HEK293 (cell line): ENCODE measurements at regions of chr6 and their contacts with region 1.

Region 1: GRCh38 chr6:152124429-152125074 is 317.1 kb downstream of the ESR1 start:
- H3K4me3 ChIP-seq: no peak overlapping the region
- H3K27ac ChIP-seq: no peak overlapping the region
- H3K4me1 ChIP-seq: no peaks in the 10 kb centered on the region
- CTCF ChIP-seq: peak; percentile 22; the same call in 1 of the 2 replicates

Region 2: GRCh38 chr6:152078804-152079203 is 45.7 kb before region 1 on chr6:
- CTCF ChIA-PET with region 1: no interaction called
- POLR2A ChIA-PET with region 1: no interaction called
- H3K4me3 ChIP-seq: no peak overlapping the region
- H3K27ac ChIP-seq: no peak overlapping the region
- H3K4me1 ChIP-seq: no peaks in the 10 kb centered on the region
- CTCF ChIP-seq: no peak

Region 3: DNA sequence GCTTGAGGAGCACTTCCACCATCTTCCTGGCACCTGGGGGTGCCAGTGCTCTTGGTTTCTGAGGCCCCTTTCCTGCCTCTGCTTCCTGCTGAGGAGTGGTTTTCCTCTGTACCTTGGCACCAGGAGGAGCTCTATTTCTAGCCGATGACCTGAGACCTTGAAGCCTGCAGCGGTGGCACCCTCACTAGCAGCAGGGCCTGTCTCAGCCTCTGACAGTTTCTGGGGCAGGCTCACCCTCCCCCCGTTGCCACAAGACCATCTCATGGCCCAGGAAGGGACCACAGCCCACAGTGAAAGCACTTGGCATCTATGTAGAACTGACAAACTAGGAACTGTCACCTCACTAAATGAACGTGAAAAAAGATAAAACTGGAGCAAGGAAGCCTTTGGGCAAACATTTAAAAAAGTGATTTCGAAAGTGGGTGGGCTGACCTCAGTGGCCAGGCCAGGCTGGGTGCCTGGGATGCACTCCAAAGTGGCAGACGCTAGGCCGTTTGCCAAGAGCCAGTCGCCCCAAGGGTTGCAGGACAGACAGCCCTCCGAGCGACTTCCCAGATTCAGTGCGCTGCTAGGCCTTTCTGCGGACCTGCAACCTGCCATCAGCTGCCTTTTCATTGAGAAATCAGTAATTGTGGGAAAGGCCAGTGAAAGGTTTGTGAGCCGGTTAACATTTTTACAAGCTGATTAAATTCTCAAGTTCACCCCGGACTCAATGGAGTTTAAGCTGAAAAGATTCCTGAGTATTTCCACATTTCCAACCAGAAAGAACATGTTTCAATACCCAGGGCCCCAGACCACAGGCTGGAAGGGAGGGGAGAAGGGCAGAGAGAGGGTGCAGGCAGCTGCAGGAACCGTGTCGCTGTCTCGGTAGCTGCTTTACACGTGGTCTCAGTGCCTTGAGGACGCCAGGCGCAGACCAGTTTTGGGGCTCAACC is 13.4 kb before region 1 on chr6:
- CTCF ChIA-PET with region 1: interaction called, 14 read pairs
- POLR2A ChIA-PET with region 1: interaction called, 3 read pairs
- H3K4me3 ChIP-seq: no peak overlapping the region
- H3K27ac ChIP-seq: no peak overlapping the region
- H3K4me1 ChIP-seq: no peaks in the 10 kb centered on the region
- CTCF ChIP-seq: no peak